Activated naive CD4-positive, alpha-beta T cell treated with anti-CD3 and anti-CD28 coated beads for 36 hours (primary cell): ENCODE measurements at regions of chr11 and their contacts with region 1.

Region 1: GRCh38 chr11:77198440-77198849 is 70.4 kb downstream of the MYO7A start:
- DNase-seq: peak; percentile 38
- H3K4me3 Mint-ChIP-seq: no peak overlapping the region
- H3K27ac Mint-ChIP-seq: no peak overlapping the region
- H3K4me1 Mint-ChIP-seq: no peaks in the 10 kb centered on the region
- H3K27me3 Mint-ChIP-seq: no peaks in the 10 kb centered on the region

Region 2: GRCh38 chr11:76885390-76886097 is 312.9 kb before region 1 on chr11:
- CTCF ChIA-PET with region 1: no interaction called
- intact Hi-C with region 1: no loop called
- DNase-seq: peak; percentile 25
- H3K4me3 Mint-ChIP-seq: no peak overlapping the region
- H3K27ac Mint-ChIP-seq: no peak overlapping the region
- H3K4me1 Mint-ChIP-seq: peaks cover 9% of the 10 kb centered on the region
- H3K27me3 Mint-ChIP-seq: no peaks in the 10 kb centered on the region

Region 3: DNA sequence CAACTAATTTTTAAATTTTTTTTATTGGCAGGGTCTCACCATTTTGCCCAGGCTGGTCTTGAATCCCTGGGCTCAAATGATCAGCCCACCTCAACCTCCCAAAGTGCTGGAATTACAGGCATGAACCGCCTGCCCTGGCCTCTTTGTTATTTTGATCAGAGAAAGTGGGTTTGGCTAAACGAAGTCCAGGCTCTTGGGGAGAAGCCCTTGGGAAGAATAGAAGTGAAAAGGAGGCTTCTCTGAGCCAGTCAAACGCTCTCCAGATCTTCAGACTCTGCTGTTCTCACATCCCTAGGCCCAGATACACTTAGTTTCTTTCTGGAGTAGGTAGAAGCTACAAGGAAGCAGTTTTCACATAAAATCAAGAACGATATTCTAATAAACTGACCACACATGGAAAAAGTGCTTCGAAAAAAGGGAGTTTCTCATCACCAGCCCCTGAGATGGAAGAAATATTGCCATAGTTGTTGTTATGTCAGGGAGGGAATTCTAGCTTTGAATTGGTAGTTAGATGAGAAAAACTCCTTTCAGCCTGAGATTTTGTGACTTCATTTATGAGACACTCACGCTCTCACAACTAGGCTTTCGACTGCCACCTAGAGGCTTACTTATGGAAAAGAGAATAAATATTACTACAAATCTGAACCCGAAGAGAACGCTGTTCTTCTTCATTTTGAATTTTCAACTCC is 349.6 kb after region 1 on chr11:
- CTCF ChIA-PET with region 1: interaction called, 13 read pairs
- intact Hi-C with region 1: no loop called
- DNase-seq: peak; percentile 55
- H3K4me3 Mint-ChIP-seq: no peak overlapping the region
- H3K27ac Mint-ChIP-seq: no peak overlapping the region
- H3K4me1 Mint-ChIP-seq: peaks cover 2% of the 10 kb centered on the region
- H3K27me3 Mint-ChIP-seq: no peaks in the 10 kb centered on the region